ENCODE measurements at regions of chr7 and their contacts with region 1.

Region 1: GRCh38 chr7:91628742-91629141 is 251.8 kb downstream of the MTERF1 start:
- DNase-seq: peak in 1 of 2 donors; percentile 39
- ATAC-seq: peak in 7 of 8 donors; percentile 30 to 89 (median 74)
- H3K4me3 ChIP-seq: no peak overlapping the region
- H3K27ac ChIP-seq: peak overlapping the region in 1 of 10 donors; percentile 2
- H3K4me1 ChIP-seq: peaks cover 0 to 24% (median 15%) of the 10 kb centered on the region in 9 donors
- H3K27me3 ChIP-seq: no peaks in the 10 kb centered on the region
- CTCF ChIP-seq: no peak

Region 2: GRCh38 chr7:90749262-90749661 is 879.5 kb before region 1 on chr7:
- intact Hi-C with region 1: no loop called
- DNase-seq: no peak
- ATAC-seq: no peak
- H3K4me3 ChIP-seq: no peak overlapping the region
- H3K27ac ChIP-seq: no peak overlapping the region
- H3K4me1 ChIP-seq: peaks cover 0 to 6% (median 0%) of the 10 kb centered on the region in 9 donors
- H3K27me3 ChIP-seq: no peaks in the 10 kb centered on the region
- CTCF ChIP-seq: no peak

Region 3: GRCh38 chr7:91345449-91345848 is 283.3 kb before region 1 on chr7:
- intact Hi-C with region 1: loop called in 2 of 10 experiments (anchors 10 kb)
- DNase-seq: no peak
- ATAC-seq: no peak
- H3K4me3 ChIP-seq: no peak overlapping the region
- H3K27ac ChIP-seq: no peak overlapping the region
- H3K4me1 ChIP-seq: peaks cover 0 to 63% (median 50%) of the 10 kb centered on the region in 9 donors
- H3K27me3 ChIP-seq: no peaks in the 10 kb centered on the region
- CTCF ChIP-seq: no peak

Region 4: DNA sequence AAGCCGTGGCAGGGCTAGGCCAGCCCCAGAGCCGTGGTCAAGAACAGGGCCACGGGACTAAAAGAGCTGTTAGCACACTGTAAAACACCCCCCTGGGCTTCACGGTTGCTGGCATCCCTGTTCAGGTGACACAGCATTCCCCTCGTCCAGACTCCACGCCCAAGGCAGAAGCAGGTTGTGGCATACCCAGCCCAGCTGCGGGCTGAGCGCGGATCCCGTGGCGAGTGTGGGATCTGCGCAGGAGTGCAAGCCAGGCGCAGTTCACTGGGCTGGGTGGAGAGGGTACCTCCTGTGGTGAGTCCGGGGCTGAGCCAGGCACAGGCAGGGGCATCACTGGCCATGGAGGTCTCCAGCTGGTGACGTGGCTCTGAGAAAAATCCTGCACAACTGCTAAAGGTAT is 165.4 kb before region 1 on chr7:
- intact Hi-C with region 1: loop called in 1 of 10 experiments (anchors 5 kb)
- DNase-seq: no peak
- ATAC-seq: no peak
- H3K4me3 ChIP-seq: no peak overlapping the region
- H3K27ac ChIP-seq: no peak overlapping the region
- H3K4me1 ChIP-seq: peaks cover 0 to 4% (median 0%) of the 10 kb centered on the region in 9 donors
- H3K27me3 ChIP-seq: no peaks in the 10 kb centered on the region
- CTCF ChIP-seq: no peak

Region 5: DNA sequence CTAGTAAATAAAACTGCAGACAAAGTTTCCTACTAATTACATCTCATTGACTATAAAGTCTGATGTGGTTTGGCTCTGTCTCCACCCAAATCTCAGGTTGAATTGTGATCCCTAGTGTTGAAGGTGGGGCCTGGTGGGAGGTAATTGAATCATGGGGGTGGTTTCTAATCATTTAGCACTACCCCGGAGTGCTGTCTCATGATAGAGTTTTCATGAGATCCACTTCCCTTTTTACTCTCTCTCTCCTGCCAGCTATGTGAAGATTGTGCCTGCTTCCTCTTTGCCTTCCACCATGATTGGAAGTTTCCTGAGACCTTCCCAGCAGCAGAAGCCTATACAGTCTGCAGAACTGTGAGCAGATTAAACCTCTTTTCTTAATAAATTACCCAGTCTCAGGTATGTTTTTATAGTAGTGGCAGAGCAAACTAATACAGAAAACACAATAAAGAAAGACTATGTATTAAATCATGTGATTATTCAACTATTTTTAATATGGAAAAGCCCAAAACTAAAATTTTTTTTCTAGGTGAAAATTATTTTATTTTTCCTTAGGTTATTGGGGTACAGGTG is 132.4 kb before region 1 on chr7:
- intact Hi-C with region 1: no loop called
- DNase-seq: no peak
- ATAC-seq: no peak
- H3K4me3 ChIP-seq: no peak overlapping the region
- H3K27ac ChIP-seq: no peak overlapping the region
- H3K4me1 ChIP-seq: no peaks in the 10 kb centered on the region
- H3K27me3 ChIP-seq: no peaks in the 10 kb centered on the region
- CTCF ChIP-seq: no peak

Region 6: DNA sequence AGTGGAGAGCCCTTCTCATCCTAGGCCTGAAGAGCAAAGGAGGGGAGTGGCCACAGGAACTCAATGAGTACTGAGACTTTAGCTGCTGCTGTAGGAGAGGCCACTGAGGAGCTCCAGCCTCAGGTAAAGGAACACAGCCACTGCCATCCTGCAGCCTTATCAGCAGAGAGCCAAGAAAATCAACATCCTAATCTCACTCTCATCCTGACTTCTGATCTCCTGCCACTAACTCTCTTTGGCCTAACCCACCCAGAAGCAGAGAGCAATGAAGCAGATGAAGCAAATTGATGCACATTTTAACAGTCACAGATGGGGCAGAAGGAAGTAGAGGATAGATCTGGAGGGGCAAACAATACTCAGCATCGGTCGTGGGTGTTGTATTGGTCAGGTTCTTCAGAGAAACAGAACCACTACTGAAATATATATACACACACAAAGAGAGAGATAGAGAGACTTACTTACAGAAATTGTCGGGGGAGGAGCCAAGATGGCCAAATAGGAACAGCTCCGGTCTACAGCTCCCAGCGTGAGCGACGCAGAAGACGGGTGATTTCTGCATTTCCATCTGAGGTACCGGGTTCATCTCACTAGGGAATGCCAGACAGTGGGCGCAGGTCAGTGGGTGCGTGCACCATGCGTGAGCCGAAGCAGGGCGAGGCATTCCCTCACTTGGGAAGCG is 45.8 kb before region 1 on chr7:
- intact Hi-C with region 1: no loop called
- DNase-seq: no peak
- ATAC-seq: no peak
- H3K4me3 ChIP-seq: no peak overlapping the region
- H3K27ac ChIP-seq: no peak overlapping the region
- H3K4me1 ChIP-seq: no peaks in the 10 kb centered on the region
- H3K27me3 ChIP-seq: no peaks in the 10 kb centered on the region
- CTCF ChIP-seq: no peak

Measured in heart right ventricle (tissue), 16 donors.